Endothelial cell of umbilical vein (primary cell): ENCODE measurements at regions of chr1 and their contacts with region 1.

Region 1: GRCh38 chr1:27284425-27285273 is 37.3 kb upstream of the TMEM222 start:
- DNase-seq: peak; percentile 74
- H3K4me3 ChIP-seq: no peak overlapping the region
- H3K27ac ChIP-seq: no peak overlapping the region
- H3K4me1 ChIP-seq: no peaks in the 10 kb centered on the region
- H3K27me3 ChIP-seq: no peaks in the 10 kb centered on the region
- CTCF ChIP-seq: peak; percentile 76 to 85
- POLR2A ChIP-seq: no peak

Region 2: GRCh38 chr1:27102707-27103491 is 181.8 kb before region 1 on chr1:
- CTCF ChIA-PET with region 1: interaction called, 131 read pairs
- POLR2A ChIA-PET with region 1: no interaction called
- dilution Hi-C with region 1: no loop called
- intact Hi-C with region 1: loop called (anchors 1 kb)
- DNase-seq: peak; percentile 60
- H3K4me3 ChIP-seq: no peak overlapping the region
- H3K27ac ChIP-seq: no peak overlapping the region
- H3K4me1 ChIP-seq: no peaks in the 10 kb centered on the region
- H3K27me3 ChIP-seq: no peaks in the 10 kb centered on the region
- CTCF ChIP-seq: peak; percentile 93 to 98
- POLR2A ChIP-seq: no peak

Region 3: GRCh38 chr1:27148591-27148990 is 136.1 kb before region 1 on chr1:
- CTCF ChIA-PET with region 1: no interaction called
- POLR2A ChIA-PET with region 1: no interaction called
- dilution Hi-C with region 1: no loop called
- intact Hi-C with region 1: no loop called
- DNase-seq: no peak
- H3K4me3 ChIP-seq: no peak overlapping the region
- H3K27ac ChIP-seq: no peak overlapping the region
- H3K4me1 ChIP-seq: peaks cover 19% of the 10 kb centered on the region
- H3K27me3 ChIP-seq: no peaks in the 10 kb centered on the region
- CTCF ChIP-seq: no peak
- POLR2A ChIP-seq: no peak